A673 (cell line): ENCODE measurements at regions of chr3 and their contacts with region 1.

Region 1: GRCh38 chr3:181700168-181701087 is 11.3 kb upstream of the SOX2 start:
- DNase-seq: peak; percentile 85
- H3K4me3 ChIP-seq: peak overlapping the region; percentile 35
- H3K27ac ChIP-seq: no peak overlapping the region
- H3K4me1 ChIP-seq: peaks cover 8% of the 10 kb centered on the region
- H3K27me3 ChIP-seq: peaks cover 46% of the 10 kb centered on the region
- CTCF ChIP-seq: peak; percentile 87

Region 2: GRCh38 chr3:180571831-180572598 is 1128.4 kb before region 1 on chr3:
- CTCF ChIA-PET with region 1: interaction called, 15 read pairs
- POLR2A ChIA-PET with region 1: no interaction called
- intact Hi-C with region 1: no loop called
- DNase-seq: no peak
- H3K4me3 ChIP-seq: no peak overlapping the region
- H3K27ac ChIP-seq: no peak overlapping the region
- H3K4me1 ChIP-seq: no peaks in the 10 kb centered on the region
- H3K27me3 ChIP-seq: peaks cover 21% of the 10 kb centered on the region
- CTCF ChIP-seq: no peak

Region 3: DNA sequence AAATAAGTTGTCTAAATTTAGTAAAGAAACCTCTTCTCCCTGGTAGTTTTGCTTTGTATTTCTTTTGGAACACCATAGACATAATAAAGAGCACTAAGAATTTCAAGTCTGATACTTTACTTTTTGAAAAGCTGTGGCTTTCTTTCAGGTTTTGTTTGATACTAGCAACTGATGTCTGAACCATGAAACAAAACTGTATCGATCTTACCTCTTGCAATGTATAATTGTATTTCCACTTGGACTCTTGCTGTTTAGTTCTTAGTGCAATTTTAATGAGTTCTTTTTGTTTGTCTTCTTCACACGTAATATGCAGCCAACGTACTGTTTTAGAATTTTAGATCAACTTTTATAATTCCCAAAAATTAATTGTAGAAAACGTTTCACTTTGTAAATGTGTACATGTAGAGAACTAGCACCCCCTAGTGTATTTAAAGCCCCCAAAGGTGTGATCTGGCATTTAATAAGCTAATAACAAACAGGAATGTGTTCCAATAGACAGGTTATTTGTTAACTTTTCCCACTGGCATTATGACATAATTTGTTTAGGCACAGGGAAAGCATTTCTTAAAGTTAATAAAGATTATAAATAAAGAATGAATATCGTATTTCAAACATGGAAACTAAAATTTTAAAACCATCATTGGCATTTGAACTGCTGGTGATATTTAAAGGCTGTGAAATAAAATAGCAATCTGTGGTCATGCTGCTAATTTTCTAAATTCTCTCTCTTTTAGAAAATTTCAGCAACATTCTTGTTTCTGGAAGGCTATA is 421.8 kb before region 1 on chr3:
- CTCF ChIA-PET with region 1: interaction called, 5 read pairs
- POLR2A ChIA-PET with region 1: no interaction called
- intact Hi-C with region 1: loop called (anchors 5 kb)
- DNase-seq: peak; percentile 13
- H3K4me3 ChIP-seq: no peak overlapping the region
- H3K27ac ChIP-seq: no peak overlapping the region
- H3K4me1 ChIP-seq: no peaks in the 10 kb centered on the region
- H3K27me3 ChIP-seq: peaks cover 44% of the 10 kb centered on the region
- CTCF ChIP-seq: peak; percentile 55

Region 4: DNA sequence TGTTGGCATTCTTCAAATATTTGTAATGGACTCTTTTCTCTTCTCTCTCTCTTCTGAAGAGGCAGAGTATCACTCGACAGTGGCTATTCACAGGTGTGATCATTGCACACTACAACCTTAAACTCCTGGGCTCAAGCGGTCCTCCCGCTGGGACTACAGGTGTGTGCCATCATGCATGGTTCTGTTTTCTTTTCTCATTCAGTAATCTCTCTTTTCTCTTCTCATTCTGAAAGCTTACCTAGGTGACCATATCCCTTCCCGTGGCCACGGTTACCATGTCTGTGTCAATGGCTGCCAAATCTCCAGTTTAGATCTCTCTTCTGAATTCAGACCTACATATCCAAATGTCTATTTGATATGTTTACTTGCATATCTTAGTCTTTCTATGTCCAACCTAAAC is 107.6 kb after region 1 on chr3:
- CTCF ChIA-PET with region 1: no interaction called
- POLR2A ChIA-PET with region 1: no interaction called
- intact Hi-C with region 1: no loop called
- DNase-seq: no peak
- H3K4me3 ChIP-seq: no peak overlapping the region
- H3K27ac ChIP-seq: no peak overlapping the region
- H3K4me1 ChIP-seq: no peaks in the 10 kb centered on the region
- H3K27me3 ChIP-seq: no peaks in the 10 kb centered on the region
- CTCF ChIP-seq: no peak